ENCODE measurements at regions of chr18 and their contacts with region 1.

Region 1: DNA sequence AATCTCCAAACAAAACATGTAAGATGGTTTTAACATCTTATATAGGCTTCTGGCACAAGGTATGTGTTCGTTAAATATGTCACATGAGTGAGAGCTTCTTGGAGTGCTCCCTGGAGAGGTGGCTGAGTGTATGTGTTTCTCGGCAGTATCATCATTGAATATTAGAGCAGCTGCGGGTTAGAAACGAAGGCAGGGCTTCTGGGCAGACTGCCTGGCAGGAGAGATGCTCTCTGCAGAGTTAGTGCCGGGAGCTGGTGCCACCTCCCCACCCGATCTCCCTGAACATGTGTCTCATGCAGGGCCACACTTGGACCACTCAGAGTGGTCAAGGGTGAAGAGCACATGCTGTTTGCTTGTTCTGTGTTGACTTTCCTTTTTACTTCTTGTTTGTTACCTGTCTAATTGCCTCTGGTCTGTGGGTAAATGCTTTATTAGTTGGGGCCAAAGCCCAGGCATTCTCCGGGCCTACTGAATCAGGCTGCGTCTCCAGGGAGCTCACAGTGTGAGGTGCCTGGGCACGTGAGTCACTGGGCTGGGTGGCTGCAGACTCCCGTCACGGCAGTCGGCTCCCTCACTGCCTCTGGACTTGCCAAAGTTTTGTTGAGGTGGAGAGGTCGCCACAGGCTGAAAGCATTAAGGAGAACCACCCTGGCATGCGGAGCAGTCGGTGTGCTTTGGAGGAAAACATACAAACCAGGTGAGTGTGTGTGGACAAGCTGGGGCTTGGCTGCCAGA is 246.6 kb downstream of the FHOD3 start:
- DNase-seq: no peak
- ATAC-seq: peak; percentile 42

Region 2: GRCh38 chr18:36608107-36608506 is 63.9 kb after region 1 on chr18:
- intact Hi-C with region 1: loop called (anchors 10 kb)
- DNase-seq: no peak
- ATAC-seq: no peak

Measured in Right ventricle myocardium superior (tissue), 1 donor.